CD8-positive, alpha-beta T cell (primary cell): ENCODE measurements at regions of chr12 and their contacts with region 1.

Region 1: GRCh38 chr12:22562036-22563028 is 18.0 kb upstream of the C2CD5 start:
- DNase-seq: no peak
- ATAC-seq: no peak
- H3K4me3 ChIP-seq: no peak overlapping the region
- H3K4me3 Mint-ChIP-seq: no peak overlapping the region
- H3K27ac ChIP-seq: no peak overlapping the region
- H3K27ac Mint-ChIP-seq: no peak overlapping the region
- H3K4me1 ChIP-seq: no peaks in the 10 kb centered on the region
- H3K4me1 Mint-ChIP-seq: no peaks in the 10 kb centered on the region
- H3K27me3 ChIP-seq: no peaks in the 10 kb centered on the region
- H3K27me3 Mint-ChIP-seq: peaks cover 2% of the 10 kb centered on the region
- CTCF ChIP-seq: no peak

Region 2: GRCh38 chr12:22551624-22552023 is 10.7 kb before region 1 on chr12:
- CTCF ChIA-PET with region 1: no interaction called
- POLR2A ChIA-PET with region 1: no interaction called
- intact Hi-C with region 1: no loop called
- DNase-seq: no peak
- ATAC-seq: no peak
- H3K4me3 ChIP-seq: no peak overlapping the region
- H3K4me3 Mint-ChIP-seq: no peak overlapping the region
- H3K27ac ChIP-seq: no peak overlapping the region
- H3K27ac Mint-ChIP-seq: no peak overlapping the region
- H3K4me1 ChIP-seq: no peaks in the 10 kb centered on the region
- H3K4me1 Mint-ChIP-seq: no peaks in the 10 kb centered on the region
- H3K27me3 ChIP-seq: no peaks in the 10 kb centered on the region
- H3K27me3 Mint-ChIP-seq: peaks cover 7% of the 10 kb centered on the region
- CTCF ChIP-seq: no peak

Region 3: GRCh38 chr12:22577667-22578066 is 15.3 kb after region 1 on chr12:
- CTCF ChIA-PET with region 1: interaction called, 3 read pairs
- POLR2A ChIA-PET with region 1: no interaction called
- intact Hi-C with region 1: loop called in 1 of 2 experiments (anchors 1 kb)
- DNase-seq: no peak
- ATAC-seq: no peak
- H3K4me3 ChIP-seq: no peak overlapping the region
- H3K4me3 Mint-ChIP-seq: no peak overlapping the region
- H3K27ac ChIP-seq: no peak overlapping the region
- H3K27ac Mint-ChIP-seq: no peak overlapping the region
- H3K4me1 ChIP-seq: no peaks in the 10 kb centered on the region
- H3K4me1 Mint-ChIP-seq: no peaks in the 10 kb centered on the region
- H3K27me3 ChIP-seq: no peaks in the 10 kb centered on the region
- H3K27me3 Mint-ChIP-seq: no peaks in the 10 kb centered on the region
- CTCF ChIP-seq: no peak